Psoas muscle (tissue), 8 donors: ENCODE measurements at regions of chr1 and their contacts with region 1.

Region 1: GRCh38 chr1:191618181-191618580 is 540.1 kb upstream of the RGS18 start:
- DNase-seq: no peak
- ATAC-seq: no peak
- H3K4me3 ChIP-seq: no peak overlapping the region
- H3K27ac ChIP-seq: no peak overlapping the region
- H3K4me1 ChIP-seq: no peaks in the 10 kb centered on the region
- H3K27me3 ChIP-seq: no peaks in the 10 kb centered on the region
- CTCF ChIP-seq: no peak

Region 2: GRCh38 chr1:191240925-191241324 is 377.3 kb before region 1 on chr1:
- intact Hi-C with region 1: loop called in 1 of 2 experiments (anchors 5 kb)
- DNase-seq: no peak
- ATAC-seq: no peak
- H3K4me3 ChIP-seq: no peak overlapping the region
- H3K27ac ChIP-seq: no peak overlapping the region
- H3K4me1 ChIP-seq: no peaks in the 10 kb centered on the region
- H3K27me3 ChIP-seq: no peaks in the 10 kb centered on the region
- CTCF ChIP-seq: no peak

Region 3: DNA sequence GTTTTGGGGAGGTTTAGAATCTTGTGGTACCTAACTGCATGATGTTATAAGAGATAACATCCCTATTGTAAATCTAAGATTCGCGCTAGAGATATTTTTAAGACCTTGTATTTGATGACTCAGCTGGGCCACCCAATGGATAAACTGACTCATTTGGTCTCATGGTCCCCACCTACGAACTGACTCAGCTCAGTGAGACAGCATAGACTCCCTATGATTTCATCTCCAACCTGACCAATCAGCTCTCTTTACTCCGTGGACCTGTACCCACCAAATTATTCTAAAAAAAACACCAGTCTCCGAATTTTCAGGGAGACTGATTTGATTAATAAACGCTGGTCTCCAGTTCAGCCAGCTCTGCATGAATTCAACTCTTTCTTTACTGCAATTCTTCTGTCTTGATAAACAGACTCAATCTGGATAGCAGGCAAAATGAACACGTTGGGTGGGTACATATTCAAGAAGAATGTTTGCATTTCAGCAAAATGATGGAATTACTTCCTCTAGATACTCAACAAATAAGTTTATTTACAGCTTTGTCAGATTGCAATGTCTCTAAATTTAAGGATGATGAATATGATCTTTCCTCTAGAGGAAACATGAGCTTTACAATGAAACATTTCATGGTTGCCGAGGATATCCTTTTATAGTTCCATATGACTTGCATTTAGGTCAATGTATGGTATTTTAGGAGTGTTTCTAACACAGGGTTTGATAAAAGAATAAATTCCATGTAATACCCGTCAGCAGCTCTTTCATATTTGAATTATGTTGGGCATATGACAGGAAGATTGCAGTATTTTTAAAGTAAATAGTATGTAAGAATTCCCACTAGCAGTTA is 23.5 kb after region 1 on chr1:
- intact Hi-C with region 1: no loop called
- DNase-seq: no peak
- ATAC-seq: no peak
- H3K4me3 ChIP-seq: no peak overlapping the region
- H3K27ac ChIP-seq: no peak overlapping the region
- H3K4me1 ChIP-seq: no peaks in the 10 kb centered on the region
- H3K27me3 ChIP-seq: no peaks in the 10 kb centered on the region
- CTCF ChIP-seq: no peak

Region 4: GRCh38 chr1:191839891-191840290 is 221.7 kb after region 1 on chr1:
- intact Hi-C with region 1: no loop called
- DNase-seq: no peak
- ATAC-seq: no peak
- H3K4me3 ChIP-seq: no peak overlapping the region
- H3K27ac ChIP-seq: no peak overlapping the region
- H3K4me1 ChIP-seq: no peaks in the 10 kb centered on the region
- H3K27me3 ChIP-seq: no peaks in the 10 kb centered on the region
- CTCF ChIP-seq: no peak

Region 5: GRCh38 chr1:192350356-192350755 is 732.2 kb after region 1 on chr1:
- intact Hi-C with region 1: no loop called
- DNase-seq: no peak
- ATAC-seq: no peak
- H3K4me3 ChIP-seq: no peak overlapping the region
- H3K27ac ChIP-seq: no peak overlapping the region
- H3K4me1 ChIP-seq: no peaks in the 10 kb centered on the region
- H3K27me3 ChIP-seq: no peaks in the 10 kb centered on the region
- CTCF ChIP-seq: no peak